Mammary epithelial cell (primary cell): ENCODE measurements at regions of chr3 and their contacts with region 1.

Region 1: DNA sequence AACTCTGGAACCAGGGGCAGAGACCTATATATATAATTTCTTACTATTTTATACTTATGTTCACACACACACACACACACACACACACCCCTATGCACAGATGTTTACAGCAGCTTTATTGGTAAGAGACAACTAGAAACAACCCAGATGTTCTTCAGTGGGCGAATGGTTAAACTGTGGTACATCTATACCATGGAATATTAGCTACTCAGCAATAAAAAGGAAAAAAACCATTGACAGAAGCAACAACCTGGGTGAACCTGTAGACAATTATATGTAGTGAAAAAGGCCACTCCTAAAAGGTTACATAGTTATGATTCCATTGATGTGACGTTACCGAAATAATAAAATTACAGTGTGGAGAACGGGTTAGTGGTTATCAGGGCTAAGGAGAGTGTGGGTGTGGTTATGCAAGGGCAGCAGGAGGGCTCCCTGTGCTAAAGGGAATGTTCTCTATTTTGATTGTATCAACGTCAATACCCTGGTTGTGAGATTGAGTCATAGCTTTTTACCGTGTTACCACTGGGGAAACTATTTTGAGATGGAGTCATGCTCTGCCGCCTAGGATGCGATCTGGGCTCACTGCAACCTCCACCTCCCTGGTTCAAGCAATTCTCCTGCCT is 85.5 kb downstream of the FLNB start:
- DNase-seq: peak; percentile 82
- H3K4me3 ChIP-seq: no peak overlapping the region
- H3K27ac ChIP-seq: no peak overlapping the region
- H3K4me1 ChIP-seq: no peaks in the 10 kb centered on the region
- H3K27me3 ChIP-seq: no peaks in the 10 kb centered on the region
- CTCF ChIP-seq: no peak

Region 2: GRCh38 chr3:58052373-58053273 is 41.1 kb before region 1 on chr3:
- CTCF ChIA-PET with region 1: no interaction called
- dilution Hi-C with region 1: loop called (anchors 5 kb)
- in situ Hi-C with region 1: no loop called
- intact Hi-C with region 1: no loop called
- DNase-seq: peak; percentile 94
- H3K4me3 ChIP-seq: peak overlapping the region in 1 of 3 experiments; percentile 25
- H3K27ac ChIP-seq: peak overlapping the region; percentile 89
- H3K4me1 ChIP-seq: peaks cover 77% of the 10 kb centered on the region
- H3K27me3 ChIP-seq: no peaks in the 10 kb centered on the region
- CTCF ChIP-seq: no peak

Region 3: DNA sequence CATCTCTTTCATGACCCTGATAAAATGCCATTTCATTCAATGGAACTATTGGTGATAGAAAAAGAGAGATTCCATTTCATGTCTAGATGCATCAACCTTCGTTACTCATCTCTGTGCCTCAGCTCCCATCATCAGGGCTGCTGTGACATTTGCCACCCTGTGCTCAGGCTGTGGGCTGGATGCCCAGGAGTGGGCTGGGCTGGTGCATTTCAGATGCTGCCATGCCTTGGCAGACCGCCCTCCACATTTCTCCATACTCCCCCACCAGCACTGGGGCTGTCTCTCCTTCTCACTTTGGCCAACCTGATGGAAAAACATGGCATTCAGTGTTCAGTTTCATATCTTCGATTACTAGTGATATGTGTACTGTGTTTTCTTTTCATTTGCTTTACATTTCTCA is 58.0 kb after region 1 on chr3:
- CTCF ChIA-PET with region 1: no interaction called
- dilution Hi-C with region 1: loop called (anchors 5 kb)
- in situ Hi-C with region 1: no loop called
- intact Hi-C with region 1: no loop called
- DNase-seq: no peak
- H3K4me3 ChIP-seq: no peak overlapping the region
- H3K27ac ChIP-seq: no peak overlapping the region
- H3K4me1 ChIP-seq: no peaks in the 10 kb centered on the region
- H3K27me3 ChIP-seq: no peaks in the 10 kb centered on the region
- CTCF ChIP-seq: no peak